Heart left ventricle (tissue), 16 donors: ENCODE measurements at regions of chr3 and their contacts with region 1.

Region 1: DNA sequence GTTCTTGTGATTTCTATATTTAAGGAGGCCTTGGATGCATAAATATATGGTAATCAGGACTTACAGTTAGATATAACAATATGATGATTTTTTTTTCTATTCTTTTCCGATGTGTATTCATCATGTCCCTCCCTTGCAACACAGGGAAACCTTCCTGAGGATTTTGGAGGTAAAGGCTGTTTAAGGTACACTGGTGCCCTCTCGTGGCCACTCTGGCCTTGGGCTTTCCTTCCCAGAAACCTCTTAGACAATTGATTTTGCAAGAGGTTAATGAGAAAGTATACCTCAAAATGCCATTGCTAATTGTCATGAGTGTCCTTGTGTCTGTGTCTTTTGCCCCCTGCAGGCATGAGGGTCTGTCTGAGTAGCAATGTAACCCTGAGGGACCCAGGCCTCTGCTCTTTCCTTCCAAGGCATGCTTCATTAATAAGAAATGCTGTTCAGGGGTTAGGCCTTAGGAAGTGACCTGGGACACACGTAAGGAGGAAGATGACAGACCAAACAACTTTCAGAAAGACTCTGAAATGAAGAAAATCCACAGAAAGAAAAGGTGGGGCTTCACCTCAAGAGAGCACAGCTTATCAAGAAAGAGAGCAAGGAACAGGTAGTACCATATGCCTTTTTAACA is 70.3 kb upstream of the PPP2R3A start:
- DNase-seq: peak; percentile 39 to 67 (median 63)
- ATAC-seq: peak; percentile 42 to 67 (median 64)
- H3K4me3 ChIP-seq: no peak overlapping the region
- H3K27ac ChIP-seq: no peak overlapping the region
- H3K4me1 ChIP-seq: no peaks in the 10 kb centered on the region
- H3K27me3 ChIP-seq: peaks cover 0 to 4% (median 0%) of the 10 kb centered on the region in 9 donors
- CTCF ChIP-seq: peak; percentile 67 to 88 (median 82)
- POLR2A ChIP-seq: no peak

Region 2: DNA sequence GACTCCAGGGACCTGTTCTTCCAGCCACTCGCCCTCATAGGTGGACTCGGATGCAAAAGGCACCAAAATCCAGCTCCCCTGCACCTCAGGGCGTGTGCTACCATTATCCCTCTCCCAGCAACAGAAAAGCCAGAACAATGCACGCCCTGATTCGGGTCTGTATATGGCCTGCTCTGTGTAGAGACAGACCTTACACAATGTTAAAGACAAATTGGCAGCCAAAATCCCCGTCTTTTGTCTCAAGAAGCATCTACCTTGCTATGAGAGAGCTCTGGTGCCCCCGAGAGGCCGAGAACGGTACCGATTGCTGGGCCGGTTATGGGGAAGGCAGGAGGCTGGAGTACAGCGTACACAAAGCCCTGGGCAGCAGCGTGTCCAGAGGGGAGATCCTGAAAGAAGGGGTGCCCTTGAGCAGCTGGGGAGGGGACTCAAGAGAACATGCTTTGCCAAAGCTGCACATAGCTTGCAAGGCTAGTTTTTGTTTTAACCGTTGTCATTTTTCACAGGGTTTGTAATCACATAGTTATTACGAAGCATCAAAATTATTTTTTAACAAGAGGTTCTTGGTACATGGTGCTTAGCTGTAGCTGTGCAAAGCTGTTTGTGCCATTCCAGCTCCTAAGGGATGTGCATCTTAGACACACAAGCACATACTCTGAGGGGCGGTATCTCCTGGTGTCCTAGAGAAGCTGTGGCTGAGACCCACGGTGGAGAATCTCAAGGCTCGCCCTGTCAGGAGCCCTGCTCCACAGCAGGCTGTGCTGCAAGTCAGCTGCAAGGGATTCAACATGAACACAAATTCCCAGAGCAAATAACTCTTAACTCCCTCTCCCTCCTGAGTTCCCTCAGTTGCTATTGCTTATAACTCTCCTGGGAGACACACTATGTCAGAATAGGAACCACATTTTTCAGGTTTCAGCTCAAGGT is 391.2 kb before region 1 on chr3:
- intact Hi-C with region 1: loop called in 1 of 10 experiments (anchors 10 kb)
- DNase-seq: peak; percentile 35 to 71 (median 51)
- ATAC-seq: peak in 3 of 4 donors; percentile 72 to 80 (median 75)
- H3K4me3 ChIP-seq: no peak overlapping the region
- H3K27ac ChIP-seq: no peak overlapping the region
- H3K4me1 ChIP-seq: peaks cover 0 to 5% (median 0%) of the 10 kb centered on the region in 12 donors
- H3K27me3 ChIP-seq: peaks cover 0 to 40% (median 5%) of the 10 kb centered on the region in 9 donors
- CTCF ChIP-seq: peak; percentile 41 to 68 (median 58)
- POLR2A ChIP-seq: no peak

Region 3: GRCh38 chr3:135736740-135737139 is 158.5 kb before region 1 on chr3:
- intact Hi-C with region 1: no loop called
- DNase-seq: no peak
- ATAC-seq: no peak
- H3K4me3 ChIP-seq: no peak overlapping the region
- H3K27ac ChIP-seq: no peak overlapping the region
- H3K4me1 ChIP-seq: no peaks in the 10 kb centered on the region
- H3K27me3 ChIP-seq: no peaks in the 10 kb centered on the region
- CTCF ChIP-seq: no peak
- POLR2A ChIP-seq: no peak

Region 4: DNA sequence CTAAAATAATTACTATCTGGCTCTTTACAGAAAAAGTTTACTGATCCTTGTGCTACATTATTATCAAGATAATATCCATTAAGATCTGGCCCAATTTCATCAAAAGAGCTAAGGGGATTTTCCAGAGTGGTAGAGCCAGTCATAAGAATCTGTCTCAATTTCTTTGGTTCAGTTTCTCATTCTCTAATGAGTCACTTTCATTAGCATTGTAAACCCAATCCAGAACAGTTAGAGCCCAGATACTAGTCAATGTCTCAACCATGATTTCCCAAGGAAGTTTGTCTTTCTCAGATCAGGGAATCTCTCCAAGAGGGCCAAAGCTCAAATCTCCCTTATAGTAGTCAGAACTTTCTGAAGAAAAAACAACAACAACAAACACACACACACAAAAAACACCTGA is 60.8 kb before region 1 on chr3:
- intact Hi-C with region 1: loop called in 1 of 10 experiments (anchors 10 kb)
- DNase-seq: no peak
- ATAC-seq: no peak
- H3K4me3 ChIP-seq: no peak overlapping the region
- H3K27ac ChIP-seq: no peak overlapping the region
- H3K4me1 ChIP-seq: no peaks in the 10 kb centered on the region
- H3K27me3 ChIP-seq: peaks cover 0 to 1% (median 0%) of the 10 kb centered on the region in 9 donors
- CTCF ChIP-seq: no peak
- POLR2A ChIP-seq: no peak

Region 5: GRCh38 chr3:135950941-135951340 is 55.7 kb after region 1 on chr3:
- intact Hi-C with region 1: no loop called
- DNase-seq: no peak
- ATAC-seq: no peak
- H3K4me3 ChIP-seq: no peak overlapping the region
- H3K27ac ChIP-seq: no peak overlapping the region
- H3K4me1 ChIP-seq: no peaks in the 10 kb centered on the region
- H3K27me3 ChIP-seq: no peaks in the 10 kb centered on the region
- CTCF ChIP-seq: no peak
- POLR2A ChIP-seq: no peak